Endothelial cell of umbilical vein (primary cell): ENCODE measurements at regions of chr13 and their contacts with region 1.

Region 1: GRCh38 chr13:102724923-102725322 is 30.1 kb upstream of the METTL21C start:
- DNase-seq: peak; percentile 76
- H3K4me3 ChIP-seq: no peak overlapping the region
- H3K27ac ChIP-seq: no peak overlapping the region
- H3K4me1 ChIP-seq: peaks cover 14% of the 10 kb centered on the region
- H3K27me3 ChIP-seq: no peaks in the 10 kb centered on the region
- CTCF ChIP-seq: peak; percentile 42
- POLR2A ChIP-seq: no peak

Region 2: GRCh38 chr13:102197193-102197592 is 527.7 kb before region 1 on chr13:
- CTCF ChIA-PET with region 1: no interaction called
- POLR2A ChIA-PET with region 1: no interaction called
- dilution Hi-C with region 1: no loop called
- intact Hi-C with region 1: loop called (anchors 10 kb)
- DNase-seq: no peak
- H3K4me3 ChIP-seq: no peak overlapping the region
- H3K27ac ChIP-seq: no peak overlapping the region
- H3K4me1 ChIP-seq: peaks cover 30% of the 10 kb centered on the region
- H3K27me3 ChIP-seq: no peaks in the 10 kb centered on the region
- CTCF ChIP-seq: no peak
- POLR2A ChIP-seq: no peak

Region 3: GRCh38 chr13:102596147-102597028 is 128.5 kb before region 1 on chr13 and contains the start of gene TPP2:
- CTCF ChIA-PET with region 1: interaction called, 76 read pairs
- POLR2A ChIA-PET with region 1: interaction called, 5 read pairs
- dilution Hi-C with region 1: no loop called
- intact Hi-C with region 1: loop called (anchors 1 kb)
- DNase-seq: peak; percentile 99
- H3K4me3 ChIP-seq: peak within 1 kb of the TSS; percentile 92 to 99 (median 97)
- H3K27ac ChIP-seq: peak within 1 kb of the TSS; percentile 94
- H3K4me1 ChIP-seq: peaks cover 32% of the 10 kb centered on the region
- H3K27me3 ChIP-seq: no peaks in the 10 kb centered on the region
- CTCF ChIP-seq: no peak
- POLR2A ChIP-seq: peak; percentile 84
- total RNA-seq, gene TPP2: 46.7 TPM in 2 replicates

Region 4: DNA sequence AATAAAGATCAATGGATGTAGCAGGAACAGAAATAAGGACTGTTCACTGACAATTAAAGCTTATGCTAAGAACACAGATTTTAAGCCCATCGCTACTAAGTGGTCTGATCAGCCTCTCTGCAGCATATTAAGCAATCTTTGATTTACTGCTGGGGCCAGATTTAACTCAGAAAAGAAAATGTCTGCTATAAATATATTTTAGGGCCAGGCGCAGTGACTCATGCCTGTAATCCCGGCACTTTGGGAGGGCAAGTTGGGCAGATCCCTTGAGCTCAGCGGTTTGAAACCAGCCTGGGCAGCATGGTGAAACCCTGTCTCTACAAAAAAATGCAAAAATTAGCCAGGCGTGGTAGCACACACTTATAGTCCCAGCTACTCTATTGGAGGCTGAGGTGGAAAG is 73.0 kb before region 1 on chr13:
- CTCF ChIA-PET with region 1: interaction called, 39 read pairs
- POLR2A ChIA-PET with region 1: no interaction called
- dilution Hi-C with region 1: no loop called
- intact Hi-C with region 1: loop called (anchors 5 kb)
- DNase-seq: no peak
- H3K4me3 ChIP-seq: no peak overlapping the region
- H3K27ac ChIP-seq: no peak overlapping the region
- H3K4me1 ChIP-seq: peaks cover 21% of the 10 kb centered on the region
- H3K27me3 ChIP-seq: no peaks in the 10 kb centered on the region
- CTCF ChIP-seq: no peak
- POLR2A ChIP-seq: no peak

Region 5: GRCh38 chr13:102688306-102688973 is 36.5 kb before region 1 on chr13:
- CTCF ChIA-PET with region 1: interaction called, 25 read pairs
- POLR2A ChIA-PET with region 1: no interaction called
- dilution Hi-C with region 1: no loop called
- intact Hi-C with region 1: no loop called
- DNase-seq: no peak
- H3K4me3 ChIP-seq: no peak overlapping the region
- H3K27ac ChIP-seq: no peak overlapping the region
- H3K4me1 ChIP-seq: no peaks in the 10 kb centered on the region
- H3K27me3 ChIP-seq: no peaks in the 10 kb centered on the region
- CTCF ChIP-seq: no peak
- POLR2A ChIP-seq: no peak

Region 6: DNA sequence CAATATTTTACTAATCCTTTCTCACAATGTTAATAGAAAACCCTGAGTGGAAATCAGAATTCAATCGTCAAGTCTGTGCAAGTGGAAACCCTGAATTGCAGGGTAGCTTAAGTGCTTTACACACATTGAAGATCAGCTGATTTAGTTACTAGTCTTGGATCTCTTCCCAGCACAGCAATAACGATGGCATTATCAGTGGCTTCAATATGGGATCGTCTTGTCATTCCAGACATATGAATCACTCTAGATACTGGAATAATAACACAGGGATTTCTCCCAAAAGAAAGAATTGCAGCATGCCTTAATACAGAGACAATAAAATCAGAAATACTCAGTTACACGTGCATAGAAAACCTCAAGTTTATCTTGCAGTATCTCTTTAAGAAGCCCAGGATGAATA is 17.5 kb before region 1 on chr13:
- CTCF ChIA-PET with region 1: interaction called, 19 read pairs
- POLR2A ChIA-PET with region 1: interaction called, 3 read pairs
- dilution Hi-C with region 1: no loop called
- intact Hi-C with region 1: loop called (anchors 1 kb)
- DNase-seq: peak; percentile 93
- H3K4me3 ChIP-seq: no peak overlapping the region
- H3K27ac ChIP-seq: peak overlapping the region; percentile 59
- H3K4me1 ChIP-seq: peaks cover 48% of the 10 kb centered on the region
- H3K27me3 ChIP-seq: no peaks in the 10 kb centered on the region
- CTCF ChIP-seq: no peak
- POLR2A ChIP-seq: no peak

Region 7: DNA sequence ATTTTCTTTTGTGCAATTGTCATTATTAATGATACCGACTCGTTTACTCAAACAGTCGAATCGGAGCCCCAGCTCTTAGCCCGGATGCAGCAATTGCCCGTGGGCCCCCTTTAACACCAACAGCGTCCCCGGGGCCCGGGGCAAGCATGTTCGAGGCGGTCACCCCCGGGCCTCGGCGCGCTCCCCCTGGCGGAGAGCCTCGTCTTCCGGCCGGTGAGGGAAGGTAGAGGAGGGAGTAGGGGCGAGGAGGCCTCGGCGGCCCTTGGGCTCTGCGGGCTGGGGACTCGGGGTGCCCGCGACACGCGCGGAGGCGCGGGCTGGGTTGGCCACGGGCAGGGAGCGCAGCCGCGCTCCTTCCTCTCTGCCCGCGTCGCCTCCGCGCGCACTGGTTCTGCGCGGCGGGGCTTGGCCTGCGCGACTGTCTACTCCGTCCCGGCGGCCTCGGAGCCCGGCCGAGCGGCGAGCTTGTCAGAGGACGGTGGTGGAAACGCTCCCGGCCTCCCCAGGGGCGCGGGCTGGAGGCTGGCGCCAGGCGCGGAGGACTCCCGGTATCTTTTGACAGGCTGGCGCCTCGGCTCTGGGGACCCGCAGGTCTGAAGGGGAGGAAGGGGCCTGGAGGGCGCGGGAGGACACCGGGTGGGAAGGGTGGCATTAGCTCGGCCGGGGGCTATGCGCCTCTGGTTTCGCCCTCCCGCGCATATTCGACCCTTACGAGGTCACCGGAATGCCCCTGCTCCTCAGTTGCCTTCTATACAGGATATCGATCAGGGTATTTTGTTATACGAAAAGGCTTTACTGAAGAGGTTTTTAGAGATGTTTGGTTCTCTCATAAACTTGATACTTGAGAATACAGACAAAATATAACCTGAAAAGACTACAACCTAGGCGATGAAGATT is 75.5 kb after region 1 on chr13:
- CTCF ChIA-PET with region 1: interaction called, 12 read pairs
- POLR2A ChIA-PET with region 1: no interaction called
- dilution Hi-C with region 1: no loop called
- intact Hi-C with region 1: loop called (anchors 1 kb)
- DNase-seq: peak; percentile 79
- H3K4me3 ChIP-seq: peak overlapping the region; percentile 47 to 71 (median 56)
- H3K27ac ChIP-seq: peak overlapping the region; percentile 41
- H3K4me1 ChIP-seq: peaks cover 18% of the 10 kb centered on the region
- H3K27me3 ChIP-seq: no peaks in the 10 kb centered on the region
- CTCF ChIP-seq: peak; percentile 76 to 85
- POLR2A ChIP-seq: no peak

Region 8: DNA sequence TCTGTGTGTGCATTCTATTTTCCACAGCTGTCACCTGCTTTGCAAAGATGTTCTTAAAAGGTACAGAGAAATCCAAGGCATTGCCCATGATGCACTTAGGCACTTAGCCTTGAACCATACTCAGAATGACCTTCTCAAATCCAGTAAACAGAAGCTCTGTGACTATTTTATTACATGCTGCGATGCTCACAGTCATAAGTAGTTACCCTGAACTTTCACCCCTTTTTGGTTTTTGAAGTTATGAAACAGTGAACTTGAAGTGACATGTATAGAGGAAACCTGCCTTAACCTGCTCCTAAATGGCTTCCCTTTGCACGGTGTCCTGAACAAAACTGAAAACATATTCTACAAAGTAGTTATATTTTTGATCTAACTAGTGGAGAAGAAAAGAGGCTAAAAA is 240.9 kb after region 1 on chr13:
- CTCF ChIA-PET with region 1: no interaction called
- POLR2A ChIA-PET with region 1: no interaction called
- dilution Hi-C with region 1: no loop called
- intact Hi-C with region 1: no loop called
- DNase-seq: no peak
- H3K4me3 ChIP-seq: no peak overlapping the region
- H3K27ac ChIP-seq: no peak overlapping the region
- H3K4me1 ChIP-seq: no peaks in the 10 kb centered on the region
- H3K27me3 ChIP-seq: no peaks in the 10 kb centered on the region
- CTCF ChIP-seq: no peak
- POLR2A ChIP-seq: no peak

Region 9: DNA sequence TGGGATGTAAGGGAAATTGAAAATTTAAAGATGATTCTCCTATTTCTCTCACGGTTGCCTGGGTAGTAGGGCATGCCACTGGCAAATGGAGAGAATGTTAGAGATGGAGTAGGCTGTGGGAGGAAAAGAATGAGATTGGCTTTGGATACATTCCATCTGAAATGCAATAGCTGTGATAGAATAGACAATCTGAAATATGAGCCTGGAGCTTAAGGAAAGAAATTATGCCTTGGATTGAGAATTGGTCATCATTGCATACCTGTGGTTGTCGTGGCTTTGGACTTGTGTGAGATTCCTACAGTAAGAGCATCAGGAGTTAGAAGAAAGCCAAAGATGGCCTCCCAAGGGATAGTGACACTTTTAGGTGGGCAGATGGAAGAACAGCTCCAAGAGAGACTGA is 646.3 kb after region 1 on chr13:
- CTCF ChIA-PET with region 1: no interaction called
- POLR2A ChIA-PET with region 1: no interaction called
- dilution Hi-C with region 1: no loop called
- intact Hi-C with region 1: no loop called
- DNase-seq: no peak
- H3K4me3 ChIP-seq: no peak overlapping the region
- H3K27ac ChIP-seq: no peak overlapping the region
- H3K4me1 ChIP-seq: no peaks in the 10 kb centered on the region
- H3K27me3 ChIP-seq: no peaks in the 10 kb centered on the region
- CTCF ChIP-seq: no peak
- POLR2A ChIP-seq: no peak

Region 10: DNA sequence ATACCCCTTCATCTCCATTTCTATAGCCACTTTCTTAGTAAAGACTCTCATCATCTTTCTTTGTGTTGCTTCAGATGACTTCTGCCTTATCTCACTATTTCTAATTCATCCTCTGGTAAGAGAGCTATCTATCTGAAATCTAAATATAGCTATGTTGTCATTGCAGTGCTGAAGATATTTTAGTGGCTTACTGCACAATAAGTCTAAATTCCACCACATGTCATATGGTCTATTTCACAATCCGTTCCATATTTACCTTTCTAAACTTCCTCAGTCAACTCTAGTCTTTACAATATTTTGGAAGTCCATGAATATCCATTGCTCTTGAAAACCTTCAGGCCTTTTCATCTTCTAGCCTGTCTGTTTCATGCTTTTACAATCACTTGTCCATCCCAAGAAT is 806.4 kb after region 1 on chr13:
- CTCF ChIA-PET with region 1: no interaction called
- POLR2A ChIA-PET with region 1: no interaction called
- dilution Hi-C with region 1: no loop called
- intact Hi-C with region 1: no loop called
- DNase-seq: no peak
- H3K4me3 ChIP-seq: no peak overlapping the region
- H3K27ac ChIP-seq: no peak overlapping the region
- H3K4me1 ChIP-seq: no peaks in the 10 kb centered on the region
- H3K27me3 ChIP-seq: no peaks in the 10 kb centered on the region
- CTCF ChIP-seq: no peak
- POLR2A ChIP-seq: no peak